Left ventricle myocardium superior (tissue), 1 donor: ENCODE measurements at regions of chr6 and their contacts with region 1.

Region 1: GRCh38 chr6:110179401-110180227 is at the start of gene WASF1:
- DNase-seq: peak; percentile 96
- ATAC-seq: peak; percentile 99
- total RNA-seq, gene WASF1: 1.7 TPM

Region 2: DNA sequence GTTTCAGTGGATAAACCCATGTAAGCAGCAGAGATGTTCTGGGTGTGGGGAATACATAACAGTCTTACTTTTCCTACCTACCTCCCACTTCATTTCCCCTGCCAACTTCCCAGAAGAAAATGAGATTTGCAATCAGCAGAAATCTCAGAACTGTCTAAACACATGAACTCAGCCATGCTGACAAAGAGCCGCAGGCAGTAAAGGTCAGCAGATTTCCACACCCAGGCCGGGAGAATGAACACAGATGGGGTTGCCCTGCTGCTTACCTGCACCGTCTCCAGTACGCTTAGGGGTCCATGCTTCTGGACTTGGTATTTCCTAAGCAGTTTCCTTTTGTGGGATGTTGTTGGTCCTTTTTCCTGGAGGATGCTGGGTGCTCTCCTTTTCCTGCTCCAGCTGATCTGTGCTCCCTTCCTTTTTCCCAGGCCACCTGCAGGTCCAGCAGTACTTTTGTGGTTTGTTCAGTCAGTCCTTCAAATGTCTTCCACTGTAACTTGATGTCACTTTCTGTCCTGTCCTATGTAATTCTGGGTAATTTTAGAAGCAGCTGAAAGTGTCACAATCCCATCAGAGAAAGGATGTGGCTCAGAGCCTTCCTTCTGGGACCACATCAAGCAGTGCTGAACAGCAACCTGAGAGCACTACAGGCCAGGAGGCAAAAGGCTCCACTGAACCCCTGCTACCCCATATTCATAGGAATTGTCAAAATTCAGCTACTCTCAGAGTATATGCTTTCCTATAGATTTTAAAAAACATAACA is 955.3 kb before region 1 on chr6:
- intact Hi-C with region 1: no loop called
- DNase-seq: no peak
- ATAC-seq: no peak

Region 3: DNA sequence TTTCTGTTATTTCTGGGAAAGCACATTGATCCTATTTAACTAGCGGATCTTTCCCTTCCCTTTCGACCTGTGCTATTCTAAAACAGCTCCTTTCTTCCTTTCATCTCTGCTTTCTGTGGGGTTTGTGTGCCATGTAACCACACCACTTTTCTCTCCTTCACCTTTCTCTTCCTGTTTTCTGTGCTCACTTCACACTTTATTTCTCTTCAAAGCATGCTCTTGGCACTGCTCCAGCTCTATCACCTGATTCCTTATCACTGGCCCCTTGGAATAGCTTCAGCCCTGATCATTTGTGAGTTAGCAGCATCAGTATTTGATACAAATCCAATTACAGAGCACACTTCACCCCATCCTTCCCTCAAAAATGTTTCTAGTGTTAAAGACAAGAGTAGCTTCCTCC is 186.6 kb after region 1 on chr6:
- intact Hi-C with region 1: loop called (anchors 10 kb)
- DNase-seq: no peak
- ATAC-seq: no peak

Region 4: GRCh38 chr6:110389689-110390382 is 210.2 kb after region 1 on chr6:
- intact Hi-C with region 1: loop called (anchors 5 kb)
- DNase-seq: no peak
- ATAC-seq: peak; percentile 57